Left cardiac atrium (tissue), 4 donors: ENCODE measurements at regions of chr1 and their contacts with region 1.

Region 1: GRCh38 chr1:153510984-153511410 is 24.8 kb downstream of the S100A6 start:
- DNase-seq: peak; percentile 88
- ATAC-seq: peak; percentile 60 to 75

Region 2: DNA sequence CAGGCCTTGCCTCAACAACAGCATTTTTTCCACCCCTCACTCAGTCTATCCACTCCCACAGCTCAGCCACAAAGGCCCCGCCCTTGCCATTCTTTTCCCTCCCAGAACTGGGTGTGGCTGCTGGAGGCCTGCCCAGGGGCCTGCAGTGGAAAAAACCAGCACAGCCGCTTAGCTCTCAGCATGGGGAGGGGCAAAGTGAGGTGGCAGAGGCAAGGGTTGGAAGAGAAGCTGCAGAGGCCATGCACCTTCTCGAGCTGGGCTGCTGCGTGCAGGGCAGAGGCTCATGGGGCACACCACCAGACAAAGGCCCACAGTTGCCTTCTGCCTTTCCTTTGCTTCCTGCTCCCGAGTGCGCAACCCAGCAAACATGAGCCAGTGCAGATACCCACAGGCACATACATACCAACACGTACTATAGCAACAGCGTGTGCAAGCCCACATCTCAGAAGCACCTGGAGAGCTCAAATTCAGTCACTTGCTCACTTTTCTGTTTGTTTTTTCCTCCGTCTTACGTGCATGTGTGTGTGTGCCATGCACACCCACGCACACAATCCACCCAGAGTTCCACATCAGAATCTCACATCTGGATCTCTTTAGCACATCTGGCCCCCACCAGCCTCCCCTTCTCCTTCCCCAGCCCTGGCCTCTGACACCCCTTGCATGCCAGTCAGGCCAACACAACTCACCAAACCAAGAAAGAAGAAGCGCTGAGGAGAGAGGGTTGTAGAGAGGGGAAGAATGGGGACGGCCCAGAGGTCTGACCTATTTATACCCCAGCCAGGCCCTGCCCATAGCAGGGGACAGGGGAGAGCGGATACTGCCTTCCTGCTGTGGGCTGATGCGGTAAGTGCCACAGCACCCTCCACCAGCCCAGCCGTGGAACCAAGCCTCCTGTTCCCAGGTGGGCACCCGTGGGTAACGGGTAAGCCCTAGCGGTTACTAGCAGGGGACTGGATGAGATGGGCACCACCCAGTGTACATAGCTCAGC is 34.4 kb after region 1 on chr1 and contains the start of gene S100A4:
- intact Hi-C with region 1: no loop called
- DNase-seq: peak; percentile 93
- ATAC-seq: peak; percentile 91
- total RNA-seq, gene S100A4: 206 to 332 TPM

Region 3: GRCh38 chr1:153775458-153776327 is 264.7 kb after region 1 on chr1:
- intact Hi-C with region 1: loop called in 1 of 2 experiments (anchors 10 kb)
- DNase-seq: peak; percentile 75
- ATAC-seq: peak; percentile 51 to 64

Region 4: GRCh38 chr1:153903841-153904455 is 393.0 kb after region 1 on chr1:
- intact Hi-C with region 1: loop called in 1 of 2 experiments (anchors 5 kb)
- DNase-seq: no peak
- ATAC-seq: peak; percentile 19 to 41

Region 5: DNA sequence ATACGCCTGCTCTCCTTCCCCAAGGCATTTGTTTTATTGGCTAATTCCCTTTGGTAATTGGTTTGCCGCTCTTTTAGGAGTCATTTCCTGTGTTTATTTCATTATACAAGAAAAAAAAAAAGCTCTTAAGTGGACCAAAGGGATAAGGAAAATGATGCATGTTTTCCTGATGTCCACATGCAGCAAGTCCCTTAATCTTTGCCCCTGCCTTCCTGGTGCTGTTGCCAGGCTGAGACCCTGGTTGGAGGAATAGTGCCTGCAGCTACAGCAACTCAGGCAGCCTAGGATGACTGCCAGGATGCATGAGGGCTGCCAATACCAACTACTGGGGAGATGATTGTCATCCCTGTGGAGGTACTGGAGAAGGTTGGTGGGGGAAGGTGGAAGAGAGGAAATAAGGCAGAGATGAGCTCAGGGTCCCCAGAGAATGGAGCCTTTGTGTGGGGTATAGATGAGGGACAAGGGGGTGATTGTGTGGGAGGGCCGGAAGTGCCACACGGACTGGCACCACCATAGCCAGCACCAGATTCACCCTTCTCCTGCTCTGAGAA is 417.9 kb after region 1 on chr1:
- intact Hi-C with region 1: no loop called
- DNase-seq: no peak
- ATAC-seq: peak in 1 of 2 donors; percentile 45